IMR-90 (cell line): ENCODE measurements at regions of chr3 and their contacts with region 1.

Region 1: GRCh38 chr3:107271787-107272387 is 105.4 kb upstream of the CCDC54 start:
- DNase-seq: peak; percentile 61
- ATAC-seq: peak; percentile 83
- H3K4me3 ChIP-seq: no peak overlapping the region
- H3K27ac ChIP-seq: no peak overlapping the region
- H3K4me1 ChIP-seq: no peaks in the 10 kb centered on the region
- H3K27me3 ChIP-seq: no peaks in the 10 kb centered on the region
- CTCF ChIP-seq: peak; percentile 78
- POLR2A ChIP-seq: no peak
- RAD21 ChIP-seq: peak; percentile 84

Region 2: GRCh38 chr3:107412376-107412775 is 140.5 kb after region 1 on chr3:
- CTCF ChIA-PET with region 1: interaction called, 10 read pairs
- POLR2A ChIA-PET with region 1: no interaction called
- dilution Hi-C with region 1: no loop called
- in situ Hi-C with region 1: no loop called
- intact Hi-C with region 1: no loop called
- DNase-seq: peak; percentile 49
- ATAC-seq: no peak
- H3K4me3 ChIP-seq: no peak overlapping the region
- H3K27ac ChIP-seq: no peak overlapping the region
- H3K4me1 ChIP-seq: 0 out of 2 replicates have a peak, but pooled peaks cover 1% of the 10 kb centered on the region
- H3K27me3 ChIP-seq: no peaks in the 10 kb centered on the region
- CTCF ChIP-seq: no peak
- POLR2A ChIP-seq: no peak
- RAD21 ChIP-seq: no peak

Region 3: GRCh38 chr3:107421170-107421792 is 149.4 kb after region 1 on chr3:
- CTCF ChIA-PET with region 1: interaction called, 39 read pairs
- POLR2A ChIA-PET with region 1: no interaction called
- dilution Hi-C with region 1: no loop called
- in situ Hi-C with region 1: no loop called
- intact Hi-C with region 1: loop called (anchors 1 kb)
- DNase-seq: peak; percentile 74
- ATAC-seq: peak; percentile 84
- H3K4me3 ChIP-seq: peak overlapping the region; percentile 52; the same call in 1 of the 2 replicates
- H3K27ac ChIP-seq: no peak overlapping the region
- H3K4me1 ChIP-seq: peaks cover 3% of the 10 kb centered on the region; the same call in 1 of the 2 replicates
- H3K27me3 ChIP-seq: no peaks in the 10 kb centered on the region
- CTCF ChIP-seq: peak; percentile 75
- POLR2A ChIP-seq: no peak
- RAD21 ChIP-seq: peak; percentile 54

Region 4: DNA sequence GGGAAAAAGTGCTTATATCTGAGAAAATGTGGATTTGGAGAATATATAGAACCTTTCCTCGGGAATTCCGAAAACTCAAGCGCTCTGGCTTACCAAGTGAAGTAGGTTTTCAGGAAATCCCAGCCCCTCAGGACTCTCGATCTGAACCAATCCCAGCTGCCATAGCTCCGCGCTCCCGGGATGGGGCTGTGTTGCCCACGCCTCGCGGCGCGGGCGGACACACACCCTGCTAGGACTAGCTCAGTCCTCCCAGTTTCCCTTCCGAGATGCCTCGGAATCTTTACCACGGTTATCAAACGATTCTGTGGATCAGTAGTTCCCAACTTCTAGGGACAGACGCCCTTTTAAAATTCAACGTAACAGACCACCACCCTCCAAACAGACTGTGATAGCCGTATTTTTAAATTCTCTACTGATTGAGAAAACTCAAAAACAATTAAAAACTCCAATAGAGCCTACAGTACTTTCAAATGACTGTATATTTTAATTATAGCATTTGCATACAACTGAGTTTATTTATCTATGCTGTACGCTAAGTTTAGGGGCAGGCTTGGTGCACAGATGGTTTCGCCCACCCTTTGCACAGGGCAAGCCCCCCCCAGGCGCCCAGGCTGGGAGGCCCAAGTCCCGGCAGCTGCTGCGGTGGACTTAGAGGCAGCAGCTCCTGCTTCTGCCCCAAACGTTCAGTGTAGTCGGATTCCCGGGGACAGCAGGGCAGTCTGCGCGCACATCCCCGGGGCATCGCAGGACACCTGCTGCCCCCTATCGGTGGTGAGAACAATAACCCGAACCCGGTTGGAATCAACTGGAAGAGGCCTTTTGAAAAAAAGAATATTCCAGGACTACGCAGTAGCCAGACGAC is 157.7 kb after region 1 on chr3:
- CTCF ChIA-PET with region 1: interaction called, 56 read pairs
- POLR2A ChIA-PET with region 1: no interaction called
- dilution Hi-C with region 1: no loop called
- in situ Hi-C with region 1: loop called (anchors 5 kb)
- intact Hi-C with region 1: loop called (anchors 1 kb)
- DNase-seq: peak; percentile 87
- ATAC-seq: peak; percentile 83
- H3K4me3 ChIP-seq: peak overlapping the region; percentile 43
- H3K27ac ChIP-seq: no peak overlapping the region
- H3K4me1 ChIP-seq: peaks cover 2% of the 10 kb centered on the region; the same call in 1 of the 2 replicates
- H3K27me3 ChIP-seq: no peaks in the 10 kb centered on the region
- CTCF ChIP-seq: peak; percentile 93
- POLR2A ChIP-seq: no peak
- RAD21 ChIP-seq: peak; percentile 80

Region 5: DNA sequence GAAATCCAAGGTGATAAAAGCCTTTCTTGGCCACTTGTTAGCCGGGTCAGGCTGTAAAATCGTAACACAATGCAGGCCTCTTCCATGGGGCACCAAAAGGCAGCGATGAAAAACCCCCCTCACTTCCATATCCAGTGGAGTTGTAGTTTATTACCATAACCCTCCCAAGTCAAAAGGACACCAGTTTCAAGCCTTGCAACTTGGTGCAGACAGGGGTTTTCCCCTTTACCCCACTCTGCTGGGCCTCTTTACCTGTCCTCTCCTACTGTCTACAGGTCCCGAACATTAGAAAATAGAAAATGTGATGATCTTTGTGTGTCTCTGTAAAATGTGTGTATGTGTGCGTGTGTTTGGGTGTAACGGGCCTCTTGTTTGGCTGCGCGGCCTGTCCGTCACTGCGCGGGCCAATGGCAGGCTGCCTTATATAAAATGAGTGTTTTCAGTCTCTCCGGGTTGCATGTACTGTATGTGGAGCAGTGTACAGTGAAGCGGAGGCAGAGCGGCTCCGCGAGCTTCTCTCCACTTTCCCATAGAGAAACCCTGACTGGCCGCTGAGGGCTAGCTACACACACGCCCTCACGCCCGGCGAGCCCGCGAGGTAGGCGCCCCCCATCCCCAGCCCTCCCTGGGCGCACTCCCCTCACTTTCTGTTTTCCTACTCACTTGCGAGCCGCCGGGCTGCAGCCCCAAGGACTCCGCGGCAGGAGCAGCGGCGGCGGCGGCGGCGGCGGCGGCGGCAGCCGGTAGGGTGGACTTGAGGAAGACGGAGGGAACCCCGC is 250.8 kb after region 1 on chr3 and contains the start of gene BBX:
- CTCF ChIA-PET with region 1: no interaction called
- POLR2A ChIA-PET with region 1: no interaction called
- dilution Hi-C with region 1: no loop called
- in situ Hi-C with region 1: no loop called
- intact Hi-C with region 1: loop called (anchors 2 kb)
- DNase-seq: peak; percentile 97
- ATAC-seq: peak; percentile 88
- H3K4me3 ChIP-seq: peak within 1 kb of the TSS; percentile 87
- H3K27ac ChIP-seq: peak within 1 kb of the TSS; percentile 91
- H3K4me1 ChIP-seq: no peaks in the 10 kb centered on the region
- H3K27me3 ChIP-seq: no peaks in the 10 kb centered on the region; the same call in 1 of the 2 replicates
- CTCF ChIP-seq: no peak
- POLR2A ChIP-seq: no peak
- RAD21 ChIP-seq: no peak
- total RNA-seq, gene BBX: 87.5 and 107 TPM in 2 replicates